ENCODE measurements at regions of chr6 and their contacts with region 1.

Region 1: GRCh38 chr6:110255211-110255755 is 75.1 kb downstream of the CDC40 start:
- DNase-seq: peak in 1 of 9 experiments; percentile 7
- ATAC-seq: no peak
- H3K4me3 ChIP-seq: no peak overlapping the region
- H3K4me3 Mint-ChIP-seq: no peak overlapping the region
- H3K27ac ChIP-seq: no peak overlapping the region
- H3K27ac Mint-ChIP-seq: no peak overlapping the region
- H3K4me1 ChIP-seq: no peaks in the 10 kb centered on the region
- H3K4me1 Mint-ChIP-seq: no peaks in the 10 kb centered on the region
- H3K27me3 ChIP-seq: no peaks in the 10 kb centered on the region
- H3K27me3 Mint-ChIP-seq: no peaks in the 10 kb centered on the region
- CTCF ChIP-seq: no peak

Region 2: DNA sequence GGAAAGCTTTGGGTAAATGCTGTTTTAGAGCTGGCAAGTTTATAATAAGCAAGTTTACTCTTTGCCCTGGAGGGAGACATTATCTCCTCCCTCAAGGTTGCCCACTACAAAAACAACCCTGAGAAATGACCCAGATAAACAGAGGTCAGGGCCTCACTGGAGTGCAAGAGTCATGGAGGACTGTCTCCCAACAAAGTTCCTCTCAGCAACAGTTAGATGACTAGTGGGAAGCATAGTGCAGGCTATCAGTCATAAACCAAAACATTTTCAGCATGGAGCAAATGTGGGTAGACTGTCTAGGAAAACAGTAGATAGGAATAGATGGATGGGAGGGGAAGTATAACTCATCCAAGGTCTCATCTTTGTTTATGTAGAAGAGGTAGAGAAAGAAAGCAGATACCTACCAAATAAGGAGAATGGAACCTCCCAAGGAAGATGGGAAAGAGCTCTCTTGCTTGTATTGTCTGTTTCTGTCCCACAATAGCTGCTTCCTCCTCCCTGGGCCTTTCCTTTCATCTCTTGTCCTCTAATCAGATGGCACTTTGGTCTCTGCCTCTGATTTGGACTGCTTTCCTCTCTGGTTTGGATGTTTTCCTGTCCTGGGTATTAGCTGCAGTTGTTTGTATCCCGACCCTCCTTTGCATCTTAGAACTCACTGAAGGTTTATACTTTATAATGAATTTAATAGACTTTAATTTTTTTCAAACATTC is 171.3 kb before region 1 on chr6:
- CTCF ChIA-PET with region 1: no interaction called
- POLR2A ChIA-PET with region 1: no interaction called
- intact Hi-C with region 1: loop called in 1 of 2 experiments (anchors 10 kb)
- DNase-seq: no peak
- ATAC-seq: no peak
- H3K4me3 ChIP-seq: no peak overlapping the region
- H3K4me3 Mint-ChIP-seq: no peak overlapping the region
- H3K27ac ChIP-seq: no peak overlapping the region
- H3K27ac Mint-ChIP-seq: no peak overlapping the region
- H3K4me1 ChIP-seq: no peaks in the 10 kb centered on the region
- H3K4me1 Mint-ChIP-seq: no peaks in the 10 kb centered on the region
- H3K27me3 ChIP-seq: no peaks in the 10 kb centered on the region
- H3K27me3 Mint-ChIP-seq: no peaks in the 10 kb centered on the region
- CTCF ChIP-seq: no peak

Region 3: GRCh38 chr6:110296241-110297025 is 41.1 kb after region 1 on chr6:
- CTCF ChIA-PET with region 1: no interaction called
- POLR2A ChIA-PET with region 1: no interaction called
- intact Hi-C with region 1: no loop called
- DNase-seq: peak in 3 of 9 experiments; percentile 22 to 42 (median 22)
- ATAC-seq: peak; percentile 59
- H3K4me3 ChIP-seq: peak overlapping the region in 1 of 2 experiments; percentile 20
- H3K4me3 Mint-ChIP-seq: peak overlapping the region; percentile 74
- H3K27ac ChIP-seq: peak overlapping the region in 1 of 2 experiments; percentile 26
- H3K27ac Mint-ChIP-seq: peak overlapping the region; percentile 71
- H3K4me1 ChIP-seq: peaks cover 9% of the 10 kb centered on the region
- H3K4me1 Mint-ChIP-seq: peaks cover 28% of the 10 kb centered on the region
- H3K27me3 ChIP-seq: no peaks in the 10 kb centered on the region
- H3K27me3 Mint-ChIP-seq: no peaks in the 10 kb centered on the region
- CTCF ChIP-seq: no peak

Measured in CD8-positive, alpha-beta T cell (primary cell).